Caco-2 (cell line): ENCODE measurements at regions of chrX and their contacts with region 1.

Region 1: DNA sequence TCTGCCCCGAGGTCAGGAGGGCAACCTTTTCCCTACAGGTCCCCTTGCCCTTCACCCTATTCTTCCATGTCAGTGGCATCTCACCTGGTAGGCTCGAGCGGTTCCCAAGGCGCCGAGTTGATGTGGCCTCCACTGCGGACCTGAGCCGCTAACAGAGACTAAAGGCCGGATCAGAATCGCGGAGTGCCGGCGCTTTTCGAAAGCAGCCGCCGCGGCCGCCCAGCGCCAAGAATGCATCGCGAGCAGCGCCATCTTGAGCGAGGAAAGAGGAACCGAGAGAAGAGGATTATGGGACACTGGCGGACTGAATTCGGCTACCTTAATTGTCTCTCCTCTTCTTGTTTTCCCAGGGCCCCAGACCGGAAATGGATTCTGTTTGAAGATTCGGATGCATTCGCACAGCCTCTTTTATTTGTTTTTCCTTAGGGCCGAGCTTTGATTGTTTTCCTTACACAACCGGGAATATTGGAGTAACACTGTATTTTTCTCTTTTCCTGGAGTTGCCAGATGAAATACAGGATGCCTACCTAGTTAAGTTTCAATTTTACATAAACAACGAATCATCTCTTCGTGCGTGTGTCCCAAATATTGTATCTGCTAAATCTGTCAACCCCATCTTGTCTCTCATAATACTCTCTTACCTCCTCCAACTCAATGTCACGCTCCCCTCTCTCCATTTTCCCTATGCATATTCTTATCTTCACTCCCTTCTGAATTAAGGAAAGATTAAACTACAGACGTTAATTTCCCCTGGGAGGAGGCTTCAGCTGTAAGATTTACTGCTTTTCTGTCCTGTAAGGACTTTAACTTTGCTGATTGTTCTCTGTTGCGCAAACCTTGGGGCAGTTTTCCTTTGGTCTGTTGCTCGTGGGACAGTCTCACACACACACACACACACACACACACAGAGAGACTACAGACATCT is at the start of gene ABCB7:
- DNase-seq: peak; percentile 64 to 67
- H3K4me3 ChIP-seq: peak within 1 kb of the TSS; percentile 65
- H3K4me3 Mint-ChIP-seq: peak within 1 kb of the TSS; percentile 99
- H3K27ac Mint-ChIP-seq: peak within 1 kb of the TSS; percentile 99
- H3K4me1 ChIP-seq: no peaks in the 10 kb centered on the region
- H3K4me1 Mint-ChIP-seq: peaks cover 13% of the 10 kb centered on the region
- H3K27me3 ChIP-seq: no peaks in the 10 kb centered on the region
- H3K27me3 Mint-ChIP-seq: no peaks in the 10 kb centered on the region
- CTCF ChIP-seq: peak in 1 of 2 experiments; percentile 26
- total RNA-seq, gene ABCB7: 27.8 and 30.5 TPM in 2 replicates

Region 2: DNA sequence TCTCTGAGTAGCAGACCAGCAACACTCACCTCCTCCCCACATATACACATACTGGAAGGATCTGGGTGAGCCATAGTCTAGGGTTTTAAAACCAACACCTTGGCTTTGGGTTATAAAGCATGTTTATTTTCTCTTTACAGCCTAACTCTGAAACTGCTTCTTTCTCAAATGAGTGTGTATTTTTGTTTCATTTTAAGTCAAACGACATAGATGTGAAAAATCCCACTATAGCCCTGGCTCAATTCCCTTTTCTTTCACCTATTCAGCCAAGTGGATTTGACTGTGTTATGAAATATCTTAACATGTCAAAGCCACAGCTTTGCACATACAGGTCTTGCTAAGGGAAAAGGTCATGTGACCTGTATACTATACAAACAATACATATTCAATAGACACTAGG is 244.8 kb before region 1 on chrX:
- CTCF ChIA-PET with region 1: no interaction called
- POLR2A ChIA-PET with region 1: no interaction called
- intact Hi-C with region 1: no loop called
- DNase-seq: no peak
- H3K4me3 ChIP-seq: no peak overlapping the region
- H3K4me3 Mint-ChIP-seq: no peak overlapping the region
- H3K27ac Mint-ChIP-seq: no peak overlapping the region
- H3K4me1 ChIP-seq: no peaks in the 10 kb centered on the region
- H3K4me1 Mint-ChIP-seq: no peaks in the 10 kb centered on the region
- H3K27me3 ChIP-seq: no peaks in the 10 kb centered on the region
- H3K27me3 Mint-ChIP-seq: no peaks in the 10 kb centered on the region
- CTCF ChIP-seq: no peak

Region 3: DNA sequence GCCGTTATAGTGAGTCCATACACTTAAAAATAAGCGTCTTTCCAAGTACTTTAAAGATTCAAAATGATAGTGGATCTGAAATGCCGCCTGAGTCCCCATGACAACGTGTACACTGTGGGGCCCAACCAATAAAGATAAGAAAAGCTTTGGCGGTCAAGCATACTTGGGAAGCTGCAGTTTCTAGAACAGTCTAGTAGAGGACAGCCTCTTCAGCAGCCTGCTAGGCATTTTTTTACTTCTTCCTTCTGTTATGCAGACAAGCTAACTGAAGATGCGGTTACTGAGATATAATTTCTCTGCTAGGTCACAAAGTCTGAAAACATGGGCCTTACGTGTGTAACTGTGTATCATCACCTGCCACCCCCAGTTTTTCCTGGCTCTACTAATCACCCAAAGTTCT is 117.2 kb after region 1 on chrX:
- CTCF ChIA-PET with region 1: no interaction called
- POLR2A ChIA-PET with region 1: no interaction called
- intact Hi-C with region 1: loop called (anchors 10 kb)
- DNase-seq: peak; percentile 40 to 41
- H3K4me3 ChIP-seq: peak overlapping the region; percentile 56
- H3K4me3 Mint-ChIP-seq: peak overlapping the region; percentile 92
- H3K27ac Mint-ChIP-seq: peak overlapping the region; percentile 88
- H3K4me1 ChIP-seq: no peaks in the 10 kb centered on the region
- H3K4me1 Mint-ChIP-seq: no peaks in the 10 kb centered on the region
- H3K27me3 ChIP-seq: no peaks in the 10 kb centered on the region
- H3K27me3 Mint-ChIP-seq: no peaks in the 10 kb centered on the region
- CTCF ChIP-seq: no peak